PC-3 (cell line): ENCODE measurements at regions of chr3 and their contacts with region 1.

Region 1: DNA sequence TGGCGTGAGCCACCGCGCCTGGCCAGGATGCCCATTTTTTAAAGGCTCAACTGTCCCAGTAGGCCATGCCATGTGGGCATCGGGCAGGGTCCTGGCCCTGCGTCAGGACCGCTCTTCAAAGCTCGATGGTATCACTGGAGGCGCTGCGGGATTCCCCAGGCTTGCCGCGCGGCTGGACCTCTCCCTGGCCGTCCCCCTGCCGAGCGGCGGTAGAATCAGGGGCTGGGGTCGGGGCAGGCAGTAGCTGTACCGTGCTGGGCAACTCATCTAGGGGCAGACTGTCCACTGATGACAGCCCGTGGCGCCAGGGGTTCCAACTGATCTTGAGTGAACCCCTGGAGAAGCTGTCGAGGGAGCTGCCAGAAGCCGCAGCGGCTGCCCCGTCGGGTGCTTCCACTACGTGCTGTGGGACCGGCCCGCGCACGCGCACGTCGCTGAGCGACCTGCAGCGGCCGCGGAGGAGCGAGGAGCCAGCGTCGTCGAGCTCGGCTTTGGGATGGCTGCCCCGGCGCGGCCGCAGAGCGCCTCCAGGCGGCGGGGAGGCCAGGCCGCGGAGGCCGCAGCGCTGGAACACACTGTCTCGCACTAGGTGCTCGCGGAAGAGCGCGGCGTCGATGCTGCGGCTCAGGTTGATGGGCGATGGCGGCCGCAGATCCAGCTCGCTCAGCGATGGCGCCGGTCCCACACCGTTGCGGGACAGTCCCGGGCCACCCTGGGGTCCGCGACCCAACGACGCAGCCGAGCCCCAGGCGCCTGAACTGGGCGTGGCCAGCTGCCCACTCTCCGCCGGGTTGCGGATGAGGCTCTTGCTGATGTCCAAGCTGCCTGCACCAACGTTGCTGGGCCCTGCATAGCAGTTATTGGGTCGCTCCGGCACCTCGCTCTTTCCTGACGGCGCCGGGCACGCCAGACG is 5.8 kb downstream of the PRRT3 start:
- DNase-seq: peak; percentile 96
- ATAC-seq: peak; percentile 76
- H3K4me3 ChIP-seq: peak overlapping the region; percentile 91
- H3K27ac ChIP-seq: peak overlapping the region; percentile 21; the same call in 1 of the 2 replicates
- H3K4me1 ChIP-seq: peaks cover 33% of the 10 kb centered on the region
- H3K27me3 ChIP-seq: no peaks in the 10 kb centered on the region
- CTCF ChIP-seq: peak; percentile 71

Region 2: DNA sequence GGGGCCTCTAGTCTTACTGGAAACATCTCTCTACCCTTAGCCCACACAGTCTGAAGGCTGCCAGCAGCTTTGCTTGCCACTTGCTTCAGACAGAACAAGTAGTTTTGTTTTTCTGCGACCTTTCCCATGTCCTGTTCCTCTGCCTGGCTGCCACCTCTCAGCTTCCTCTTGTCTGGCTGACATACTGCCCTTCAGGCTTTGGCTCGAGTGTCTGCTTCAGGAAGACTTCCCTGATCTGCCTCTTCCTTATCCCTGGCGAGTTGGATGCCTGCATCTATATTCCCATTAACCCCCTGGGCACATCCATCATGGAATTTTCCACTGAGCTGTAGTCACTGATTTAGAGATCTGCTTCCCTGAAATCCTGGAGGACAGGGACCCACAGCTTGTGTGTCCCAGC is 267.9 kb before region 1 on chr3:
- CTCF ChIA-PET with region 1: no interaction called
- POLR2A ChIA-PET with region 1: no interaction called
- intact Hi-C with region 1: no loop called
- DNase-seq: no peak
- ATAC-seq: no peak
- H3K4me3 ChIP-seq: no peak overlapping the region
- H3K27ac ChIP-seq: no peak overlapping the region
- H3K4me1 ChIP-seq: peaks cover 12% of the 10 kb centered on the region
- H3K27me3 ChIP-seq: no peaks in the 10 kb centered on the region
- CTCF ChIP-seq: no peak

Region 3: GRCh38 chr3:9690451-9691450 is 255.6 kb before region 1 on chr3:
- CTCF ChIA-PET with region 1: no interaction called
- POLR2A ChIA-PET with region 1: no interaction called
- intact Hi-C with region 1: no loop called
- DNase-seq: no peak
- ATAC-seq: no peak
- H3K4me3 ChIP-seq: no peak overlapping the region
- H3K27ac ChIP-seq: no peak overlapping the region
- H3K4me1 ChIP-seq: no peaks in the 10 kb centered on the region
- H3K27me3 ChIP-seq: no peaks in the 10 kb centered on the region
- CTCF ChIP-seq: no peak

Region 4: DNA sequence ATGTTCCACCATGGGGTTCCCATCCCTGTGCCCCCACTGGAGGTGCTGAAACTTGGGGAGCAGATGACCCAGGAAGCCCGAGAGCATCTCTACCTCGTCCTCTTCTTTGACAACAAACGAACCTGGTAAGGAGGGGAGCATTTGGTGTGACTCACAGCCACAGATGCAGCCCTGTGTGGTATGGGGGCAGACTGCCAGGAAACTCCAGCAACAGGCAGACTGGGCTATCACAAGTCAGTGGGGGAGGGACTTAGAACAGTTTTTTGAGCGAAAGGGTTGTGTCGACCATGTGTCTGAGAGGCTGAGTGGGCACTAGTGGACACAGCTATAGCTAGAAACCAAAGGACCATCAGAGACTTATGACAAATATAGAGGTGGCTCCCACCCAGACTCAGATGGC is 200.0 kb before region 1 on chr3:
- CTCF ChIA-PET with region 1: no interaction called
- POLR2A ChIA-PET with region 1: no interaction called
- intact Hi-C with region 1: no loop called
- DNase-seq: peak; percentile 45
- ATAC-seq: no peak
- H3K4me3 ChIP-seq: no peak overlapping the region
- H3K27ac ChIP-seq: no peak overlapping the region
- H3K4me1 ChIP-seq: peaks cover 22% of the 10 kb centered on the region
- H3K27me3 ChIP-seq: no peaks in the 10 kb centered on the region
- CTCF ChIP-seq: no peak

Region 5: DNA sequence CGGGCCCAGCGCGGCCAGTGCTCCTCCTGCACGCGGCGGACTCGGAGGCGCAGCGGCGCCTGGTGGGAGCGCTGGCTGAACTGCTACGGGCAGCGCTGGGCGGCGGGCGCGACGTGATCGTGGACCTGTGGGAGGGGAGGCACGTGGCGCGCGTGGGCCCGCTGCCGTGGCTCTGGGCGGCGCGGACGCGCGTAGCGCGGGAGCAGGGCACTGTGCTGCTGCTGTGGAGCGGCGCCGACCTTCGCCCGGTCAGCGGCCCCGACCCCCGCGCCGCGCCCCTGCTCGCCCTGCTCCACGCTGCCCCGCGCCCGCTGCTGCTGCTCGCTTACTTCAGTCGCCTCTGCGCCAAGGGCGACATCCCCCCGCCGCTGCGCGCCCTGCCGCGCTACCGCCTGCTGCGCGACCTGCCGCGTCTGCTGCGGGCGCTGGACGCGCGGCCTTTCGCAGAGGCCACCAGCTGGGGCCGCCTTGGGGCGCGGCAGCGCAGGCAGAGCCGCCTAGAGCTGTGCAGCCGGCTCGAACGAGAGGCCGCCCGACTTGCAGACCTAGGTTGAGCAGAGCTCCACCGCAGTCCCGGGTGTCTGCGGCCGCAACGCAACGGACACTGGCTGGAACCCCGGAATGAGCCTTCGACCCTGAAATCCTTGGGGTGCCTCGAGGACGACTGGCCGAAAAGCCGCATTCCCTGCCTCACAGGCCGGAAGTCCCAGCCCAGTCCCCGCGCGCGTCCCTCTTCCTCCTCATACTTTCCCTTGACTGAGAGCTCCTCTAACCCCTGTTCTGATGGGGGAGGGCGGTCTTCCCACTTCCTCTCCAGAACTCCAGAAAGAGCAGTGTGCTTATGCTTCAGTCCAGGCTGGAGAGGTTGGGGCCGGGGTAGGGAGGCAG is 30.9 kb before region 1 on chr3:
- CTCF ChIA-PET with region 1: interaction called, 5 read pairs
- POLR2A ChIA-PET with region 1: no interaction called
- intact Hi-C with region 1: loop called (anchors 1 kb)
- DNase-seq: peak; percentile 78
- ATAC-seq: peak; percentile 21
- H3K4me3 ChIP-seq: peak overlapping the region; percentile 74
- H3K27ac ChIP-seq: peak overlapping the region; percentile 99
- H3K4me1 ChIP-seq: peaks cover 67% of the 10 kb centered on the region
- H3K27me3 ChIP-seq: no peaks in the 10 kb centered on the region
- CTCF ChIP-seq: peak; percentile 5; the same call in 1 of the 2 replicates

Region 6: GRCh38 chr3:9970020-9970687 is 23.8 kb after region 1 on chr3:
- CTCF ChIA-PET with region 1: interaction called, 3 read pairs
- POLR2A ChIA-PET with region 1: interaction called, 4 read pairs
- intact Hi-C with region 1: loop called (anchors 1 kb)
- DNase-seq: peak; percentile 94
- ATAC-seq: peak; percentile 89
- H3K4me3 ChIP-seq: peak overlapping the region; percentile 21; the same call in 1 of the 2 replicates
- H3K27ac ChIP-seq: peak overlapping the region; percentile 86
- H3K4me1 ChIP-seq: peaks cover 29% of the 10 kb centered on the region
- H3K27me3 ChIP-seq: no peaks in the 10 kb centered on the region
- CTCF ChIP-seq: no peak

Region 7: GRCh38 chr3:10026084-10026890 is 79.9 kb after region 1 on chr3 and contains the start of gene FANCD2:
- CTCF ChIA-PET with region 1: interaction called, 5 read pairs
- POLR2A ChIA-PET with region 1: no interaction called
- intact Hi-C with region 1: loop called (anchors 5 kb)
- DNase-seq: peak; percentile 93
- ATAC-seq: peak; percentile 87
- H3K4me3 ChIP-seq: peak within 1 kb of the TSS; percentile 94
- H3K27ac ChIP-seq: peak within 1 kb of the TSS; percentile 67
- H3K4me1 ChIP-seq: peaks cover 27% of the 10 kb centered on the region
- H3K27me3 ChIP-seq: no peaks in the 10 kb centered on the region
- CTCF ChIP-seq: no peak
- total RNA-seq, gene FANCD2: 58.7 and 67.9 TPM in 2 replicates

Region 8: DNA sequence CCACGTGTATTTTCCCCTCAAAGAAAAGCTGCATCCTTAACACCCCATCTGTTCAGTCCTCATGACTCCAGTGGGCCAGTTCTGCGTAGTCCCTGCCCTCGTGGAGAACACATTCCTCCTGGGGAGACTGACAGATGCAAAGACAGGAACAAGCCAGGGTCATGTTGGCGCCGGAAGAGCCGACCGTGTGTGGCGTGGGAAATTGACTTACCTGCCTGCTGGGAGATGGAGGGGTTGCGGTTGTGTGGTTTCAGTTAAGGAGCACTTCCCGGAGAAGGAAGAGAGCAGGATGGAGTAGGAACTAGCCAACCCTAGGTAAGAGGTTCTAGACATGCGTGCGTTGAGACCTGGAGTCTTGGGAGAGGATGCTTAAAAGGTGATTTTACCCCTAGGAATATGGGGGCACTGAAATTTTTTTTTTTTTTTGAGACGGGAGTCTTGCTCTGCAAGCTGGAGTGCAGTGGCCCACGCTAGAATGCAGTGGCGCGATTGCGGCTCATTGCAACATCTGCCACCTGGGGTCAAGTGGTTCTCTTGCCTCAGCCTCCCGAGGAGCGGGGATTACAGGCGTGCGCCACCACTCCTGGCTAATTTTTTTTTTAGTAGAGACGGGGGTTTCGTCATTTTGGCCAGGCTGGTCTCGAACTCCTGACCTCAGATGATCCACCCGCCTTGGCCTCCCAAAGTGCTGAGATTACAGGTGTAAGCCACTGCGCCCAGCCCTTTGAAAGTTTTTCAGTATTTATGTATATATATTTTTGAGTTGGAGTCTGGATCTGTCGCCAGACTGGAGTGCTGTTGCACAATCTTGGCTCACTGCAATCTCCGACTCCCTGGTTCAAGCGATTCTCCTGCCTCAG is 196.6 kb after region 1 on chr3:
- CTCF ChIA-PET with region 1: no interaction called
- POLR2A ChIA-PET with region 1: no interaction called
- intact Hi-C with region 1: no loop called
- DNase-seq: peak; percentile 48
- ATAC-seq: peak; percentile 14
- H3K4me3 ChIP-seq: peak overlapping the region; percentile 97
- H3K27ac ChIP-seq: peak overlapping the region; percentile 63
- H3K4me1 ChIP-seq: peaks cover 10% of the 10 kb centered on the region; the same call in 1 of the 2 replicates
- H3K27me3 ChIP-seq: no peaks in the 10 kb centered on the region
- CTCF ChIP-seq: no peak